Activated CD4-positive, alpha-beta memory T cell treated with anti-CD3 and anti-CD28 coated beads for 36 hours (primary cell): ENCODE measurements at regions of chr10 and their contacts with region 1.

Region 1: DNA sequence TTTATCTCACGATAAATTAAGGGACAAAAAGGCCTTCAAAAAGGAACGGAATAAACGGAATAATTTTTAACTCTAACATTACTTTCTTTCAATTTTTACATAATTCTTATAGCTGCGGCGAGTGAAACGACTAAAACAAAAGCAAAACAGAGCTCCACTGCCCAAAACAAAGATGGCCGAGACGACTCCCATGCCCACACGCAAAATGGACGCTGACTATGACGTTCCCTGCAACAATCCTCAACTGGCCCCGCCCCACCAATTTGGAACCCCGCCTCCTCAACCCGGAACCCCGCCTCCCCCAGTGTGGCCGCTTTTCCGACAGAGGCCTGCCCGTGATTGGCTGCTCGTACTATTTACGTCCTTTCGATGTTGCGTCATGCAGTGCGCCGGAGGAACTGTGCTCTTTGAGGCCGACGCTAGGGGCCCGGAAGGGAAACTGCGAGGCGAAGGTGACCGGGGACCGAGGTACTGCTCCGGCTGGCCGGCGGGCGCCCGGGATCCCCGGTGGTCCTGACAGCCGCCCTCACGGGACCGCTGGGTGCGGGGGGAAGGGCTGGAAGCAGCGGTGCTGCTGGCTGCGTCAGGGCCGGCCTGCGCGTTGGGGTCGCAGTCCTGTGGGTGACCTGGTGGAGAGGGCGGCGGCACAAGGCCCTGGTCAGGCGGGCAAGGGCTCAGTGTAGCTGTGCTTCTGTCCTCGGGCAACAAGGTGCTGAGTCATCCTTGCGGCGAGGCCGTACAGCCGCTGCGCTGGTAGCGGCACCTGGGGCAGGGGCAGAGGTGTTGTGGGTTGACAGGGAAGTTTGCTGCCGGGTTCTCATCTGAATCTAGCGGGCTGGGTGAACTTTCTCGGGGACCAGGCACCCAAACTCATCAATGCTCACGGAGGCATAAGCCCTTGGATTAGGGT is at the start of gene GHITM:
- DNase-seq: peak; percentile 100
- H3K4me3 Mint-ChIP-seq: peak within 1 kb of the TSS; percentile 97
- H3K27ac Mint-ChIP-seq: peak within 1 kb of the TSS; percentile 95
- H3K4me1 Mint-ChIP-seq: peaks cover 34% of the 10 kb centered on the region
- H3K27me3 Mint-ChIP-seq: no peaks in the 10 kb centered on the region
- total RNA-seq, gene GHITM: 192 to 197 TPM

Region 2: GRCh38 chr10:84126785-84127167 is 12.6 kb before region 1 on chr10:
- CTCF ChIA-PET with region 1: no interaction called
- POLR2A ChIA-PET with region 1: no interaction called
- intact Hi-C with region 1: loop called (anchors 1 kb)
- DNase-seq: no peak
- H3K4me3 Mint-ChIP-seq: no peak overlapping the region
- H3K27ac Mint-ChIP-seq: no peak overlapping the region
- H3K4me1 Mint-ChIP-seq: no peaks in the 10 kb centered on the region
- H3K27me3 Mint-ChIP-seq: peaks cover 16% of the 10 kb centered on the region

Region 3: GRCh38 chr10:84177541-84178141 is 38.3 kb after region 1 on chr10:
- CTCF ChIA-PET with region 1: no interaction called
- POLR2A ChIA-PET with region 1: no interaction called
- intact Hi-C with region 1: loop called (anchors 2 kb)
- DNase-seq: peak; percentile 60
- H3K4me3 Mint-ChIP-seq: no peak overlapping the region
- H3K27ac Mint-ChIP-seq: no peak overlapping the region
- H3K4me1 Mint-ChIP-seq: peaks cover 8% of the 10 kb centered on the region
- H3K27me3 Mint-ChIP-seq: no peaks in the 10 kb centered on the region

Region 4: GRCh38 chr10:84256510-84257342 is 117.3 kb after region 1 on chr10:
- CTCF ChIA-PET with region 1: interaction called, 3 read pairs
- POLR2A ChIA-PET with region 1: no interaction called
- intact Hi-C with region 1: loop called (anchors 5 kb)
- DNase-seq: peak; percentile 71
- H3K4me3 Mint-ChIP-seq: no peak overlapping the region
- H3K27ac Mint-ChIP-seq: no peak overlapping the region
- H3K4me1 Mint-ChIP-seq: peaks cover 2% of the 10 kb centered on the region
- H3K27me3 Mint-ChIP-seq: peaks cover 9% of the 10 kb centered on the region